Activated T-helper 1 cell treated with anti-CD3 and anti-CD28 coated beads, Interleukin-12 subunit alpha, Interleukin-12 subunit beta, Interleukin-2, Interleukin-4 antibody, amounts not matched to agents 30 ng/mL and 10 ng/mL and 1 ng/mL, durations not matched to agents 14 hours and 24 hours and 36 hours (primary cell): ENCODE measurements at regions of chr11 and their contacts with region 1.

Region 1: GRCh38 chr11:88312628-88313027 is 24.9 kb downstream of the CTSC start:
- DNase-seq: no peak
- H3K4me3 Mint-ChIP-seq: peak overlapping the region; percentile 32
- H3K27ac Mint-ChIP-seq: peak overlapping the region; percentile 37
- H3K4me1 Mint-ChIP-seq: peaks cover 55% of the 10 kb centered on the region
- H3K27me3 Mint-ChIP-seq: no peaks in the 10 kb centered on the region

Region 2: GRCh38 chr11:88327061-88327460 is 14.4 kb after region 1 on chr11:
- intact Hi-C with region 1: loop called (anchors 2 kb)
- DNase-seq: no peak
- H3K4me3 Mint-ChIP-seq: no peak overlapping the region
- H3K27ac Mint-ChIP-seq: no peak overlapping the region
- H3K4me1 Mint-ChIP-seq: peaks cover 93% of the 10 kb centered on the region
- H3K27me3 Mint-ChIP-seq: no peaks in the 10 kb centered on the region

Region 3: DNA sequence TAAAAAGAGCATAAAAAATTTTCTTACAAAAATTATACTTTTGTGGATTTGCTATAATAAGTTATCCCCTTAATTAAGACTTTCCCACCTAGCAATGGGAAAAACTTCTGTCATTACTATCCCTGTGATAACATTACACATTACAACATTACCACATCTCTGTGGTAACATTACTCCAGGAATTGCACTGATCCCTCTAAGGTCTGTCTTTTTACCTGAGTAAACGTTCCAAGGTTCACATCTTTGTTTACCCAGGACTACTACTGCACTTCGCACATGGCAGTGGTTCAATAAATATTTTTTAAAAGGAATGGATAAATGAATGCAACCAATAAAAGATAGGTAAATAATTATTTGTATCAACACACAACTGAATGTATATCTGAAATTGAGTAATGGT is 1271.0 kb after region 1 on chr11:
- intact Hi-C with region 1: no loop called
- DNase-seq: no peak
- H3K4me3 Mint-ChIP-seq: no peak overlapping the region
- H3K27ac Mint-ChIP-seq: no peak overlapping the region
- H3K4me1 Mint-ChIP-seq: no peaks in the 10 kb centered on the region
- H3K27me3 Mint-ChIP-seq: no peaks in the 10 kb centered on the region